Sigmoid colon (tissue), 7 donors: ENCODE measurements at regions of chr11 and their contacts with region 1.

Region 1: DNA sequence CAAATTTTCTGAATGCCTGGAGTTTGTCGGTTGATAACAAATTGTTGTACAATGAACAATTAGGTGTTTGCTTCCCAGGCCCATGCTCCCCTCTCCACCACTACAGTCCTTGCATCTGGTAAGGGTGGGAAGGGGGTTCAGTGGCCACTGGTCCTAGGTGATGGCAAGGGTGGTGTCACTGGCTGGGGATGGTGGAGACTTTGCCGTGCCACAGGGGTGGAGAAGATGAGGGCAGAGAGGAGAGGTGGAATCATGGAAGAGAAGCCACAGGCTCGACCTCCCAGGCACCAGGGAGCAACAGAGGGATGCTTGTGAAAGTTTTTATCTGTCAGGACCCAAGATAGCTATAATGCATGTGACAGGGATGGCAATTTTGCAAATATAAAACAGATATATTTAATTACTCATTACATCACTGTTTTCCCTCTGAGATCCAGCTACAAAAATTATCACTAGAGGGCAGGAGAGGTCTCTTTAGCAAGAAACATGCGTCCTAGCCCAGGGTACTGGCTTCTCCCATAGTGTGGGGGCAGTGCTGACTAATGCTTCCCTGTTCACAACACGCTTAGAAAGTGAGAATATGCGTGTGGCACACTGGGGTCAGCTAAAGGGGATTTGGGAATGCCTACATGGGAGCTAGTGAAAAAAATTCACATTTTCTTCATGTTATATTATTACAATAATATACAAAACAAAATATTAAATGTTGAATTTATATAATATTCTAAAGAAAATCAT is 49.0 kb upstream of the AMPD3 start:
- DNase-seq: peak; percentile 88
- H3K4me3 ChIP-seq: no peak overlapping the region
- H3K27ac ChIP-seq: no peak overlapping the region
- H3K4me1 ChIP-seq: peaks cover 0 to 35% (median 13%) of the 10 kb centered on the region in 4 donors
- H3K27me3 ChIP-seq: no peaks in the 10 kb centered on the region
- CTCF ChIP-seq: peak; percentile 40 to 76 (median 64)
- EP300 ChIP-seq: no peak
- POLR2A ChIP-seq: no peak

Region 2: DNA sequence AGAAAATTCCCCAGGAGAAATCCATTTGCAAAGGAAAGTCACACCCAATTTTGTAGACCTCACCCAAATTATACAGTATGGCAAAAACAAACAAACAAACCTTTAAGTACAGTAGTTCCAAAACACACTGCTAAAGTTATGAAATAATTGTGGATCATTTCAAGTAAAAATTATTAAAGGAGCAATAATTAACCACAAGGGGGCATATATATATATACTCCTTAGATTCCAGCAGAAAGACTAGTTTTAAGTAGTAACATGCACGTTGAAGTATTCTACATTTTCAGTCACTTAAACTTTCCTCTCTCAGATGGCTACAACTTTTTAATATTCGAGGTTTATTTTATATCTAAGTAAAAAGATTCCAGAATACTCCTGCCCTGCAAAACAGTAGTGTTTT is 108.2 kb after region 1 on chr11:
- intact Hi-C with region 1: loop called (anchors 5 kb)
- DNase-seq: no peak
- H3K4me3 ChIP-seq: no peak overlapping the region
- H3K27ac ChIP-seq: no peak overlapping the region
- H3K4me1 ChIP-seq: peaks cover 0 to 5% (median 0%) of the 10 kb centered on the region in 4 donors
- H3K27me3 ChIP-seq: no peaks in the 10 kb centered on the region
- CTCF ChIP-seq: peak in 2 of 4 experiments; percentile 11 to 41
- EP300 ChIP-seq: no peak
- POLR2A ChIP-seq: no peak

Region 3: DNA sequence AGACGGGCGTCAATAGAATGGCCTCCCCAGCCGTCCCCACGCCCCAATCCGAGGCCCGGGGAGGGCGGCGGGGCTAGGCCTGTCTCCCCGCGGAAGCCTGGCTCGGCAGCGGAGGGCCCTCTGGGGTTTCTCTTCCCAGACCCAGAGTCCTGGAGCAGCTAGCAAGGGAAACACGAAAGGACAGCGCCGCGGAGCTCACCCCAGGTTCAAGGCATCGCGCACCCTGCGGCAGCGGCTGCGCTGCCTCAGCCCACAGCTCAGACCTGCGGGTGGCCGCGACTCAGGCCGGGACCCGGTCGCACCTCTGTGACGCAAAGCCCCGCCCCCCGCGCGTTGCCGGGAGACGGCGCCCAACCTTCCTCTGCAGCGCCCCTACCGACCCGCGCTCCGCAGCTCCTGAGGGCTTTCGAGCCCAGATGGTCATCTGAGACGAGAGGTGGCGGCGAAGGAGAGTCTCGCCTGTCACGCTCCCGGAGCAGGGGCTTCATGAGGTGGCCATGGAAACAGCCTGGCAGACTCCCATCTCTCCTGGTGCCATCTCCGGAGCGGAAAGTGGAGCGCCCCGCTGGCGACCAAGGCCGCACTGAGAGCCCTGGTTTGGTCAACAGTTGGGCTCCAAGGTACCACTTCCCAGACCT is 135.0 kb after region 1 on chr11 and contains the start of gene RNF141:
- intact Hi-C with region 1: loop called (anchors 5 kb)
- DNase-seq: peak; percentile 97
- H3K4me3 ChIP-seq: peak within 1 kb of the TSS; percentile 64 to 93 (median 85)
- H3K27ac ChIP-seq: peak within 1 kb of the TSS; percentile 81 to 91 (median 88)
- H3K4me1 ChIP-seq: peaks cover 0 to 14% (median 5%) of the 10 kb centered on the region in 4 donors
- H3K27me3 ChIP-seq: no peaks in the 10 kb centered on the region
- CTCF ChIP-seq: peak; percentile 72 to 88 (median 80)
- EP300 ChIP-seq: peak in 1 of 4 donors; percentile 15
- POLR2A ChIP-seq: peak; percentile 85 to 86
- total RNA-seq, gene RNF141: 19.7 to 30.3 (median 26.5) TPM